ENCODE measurements at regions of chr11 and their contacts with region 1.

Region 1: GRCh38 chr11:46889689-46890475 is 28.5 kb downstream of the LRP4 start:
- DNase-seq: peak; percentile 67 to 81
- H3K4me3 ChIP-seq: no peak overlapping the region
- H3K4me3 Mint-ChIP-seq: no peak overlapping the region
- H3K27ac Mint-ChIP-seq: no peak overlapping the region
- H3K4me1 ChIP-seq: no peaks in the 10 kb centered on the region
- H3K4me1 Mint-ChIP-seq: no peaks in the 10 kb centered on the region
- H3K27me3 ChIP-seq: no peaks in the 10 kb centered on the region
- H3K27me3 Mint-ChIP-seq: no peaks in the 10 kb centered on the region
- CTCF ChIP-seq: peak; percentile 85 to 91

Region 2: DNA sequence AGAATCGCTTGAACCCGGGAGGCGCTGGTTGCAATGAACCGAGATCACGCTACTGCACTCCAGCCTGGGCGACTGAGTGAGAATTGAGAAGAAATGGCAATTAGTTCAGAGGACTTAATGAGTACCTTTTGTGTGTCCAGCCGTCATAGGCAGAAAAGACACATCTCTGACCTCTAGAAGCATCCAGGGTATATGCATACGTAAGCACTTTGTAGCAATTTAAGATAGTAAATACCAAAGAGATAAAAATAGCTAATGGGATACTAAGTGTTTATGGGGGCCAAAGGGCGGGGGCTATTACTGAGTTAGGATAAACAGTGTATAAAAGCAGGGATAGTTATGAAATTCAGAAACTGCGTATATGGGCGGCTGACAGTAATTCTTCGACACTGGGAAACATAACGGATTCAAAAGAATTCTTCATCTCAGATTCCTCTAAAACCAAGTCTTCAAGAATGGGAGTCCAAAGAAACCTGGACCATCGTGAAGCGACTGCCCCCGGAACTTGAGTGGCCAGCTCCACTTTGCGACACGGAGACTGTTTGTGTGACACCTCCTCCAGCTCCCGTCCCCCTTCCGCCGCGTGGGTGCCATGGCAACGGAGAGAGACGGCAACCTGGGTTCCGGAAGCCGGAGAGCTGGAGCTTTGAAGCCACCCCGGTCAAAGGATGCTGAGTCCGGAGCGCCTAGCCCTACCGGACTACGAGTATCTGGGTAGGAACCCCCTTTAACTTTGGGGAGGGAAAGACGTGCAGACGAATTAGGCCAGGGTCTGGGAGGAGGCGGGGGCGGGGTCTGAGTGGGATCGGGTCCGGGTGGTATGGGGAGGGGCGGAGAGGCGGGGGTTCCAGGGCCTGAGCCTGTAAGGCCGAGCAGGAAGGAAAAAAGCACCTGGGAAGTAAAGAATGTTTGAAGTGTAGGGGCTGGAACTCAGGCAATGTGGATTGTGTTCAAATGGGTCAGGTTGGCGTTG is 46.5 kb after region 1 on chr11 and contains the start of gene CSTPP1:
- CTCF ChIA-PET with region 1: no interaction called
- POLR2A ChIA-PET with region 1: no interaction called
- intact Hi-C with region 1: no loop called
- DNase-seq: peak; percentile 97
- H3K4me3 ChIP-seq: peak within 1 kb of the TSS; percentile 83
- H3K4me3 Mint-ChIP-seq: peak within 1 kb of the TSS; percentile 75
- H3K27ac Mint-ChIP-seq: peak within 1 kb of the TSS; percentile 75
- H3K4me1 ChIP-seq: 0 out of 2 replicates have a peak, but pooled peaks cover 4% of the 10 kb centered on the region
- H3K4me1 Mint-ChIP-seq: peaks cover 7% of the 10 kb centered on the region
- H3K27me3 ChIP-seq: no peaks in the 10 kb centered on the region
- H3K27me3 Mint-ChIP-seq: peaks cover 3% of the 10 kb centered on the region
- CTCF ChIP-seq: no peak
- total RNA-seq, gene CSTPP1: 19.8 and 22.9 TPM in 2 replicates

Region 3: DNA sequence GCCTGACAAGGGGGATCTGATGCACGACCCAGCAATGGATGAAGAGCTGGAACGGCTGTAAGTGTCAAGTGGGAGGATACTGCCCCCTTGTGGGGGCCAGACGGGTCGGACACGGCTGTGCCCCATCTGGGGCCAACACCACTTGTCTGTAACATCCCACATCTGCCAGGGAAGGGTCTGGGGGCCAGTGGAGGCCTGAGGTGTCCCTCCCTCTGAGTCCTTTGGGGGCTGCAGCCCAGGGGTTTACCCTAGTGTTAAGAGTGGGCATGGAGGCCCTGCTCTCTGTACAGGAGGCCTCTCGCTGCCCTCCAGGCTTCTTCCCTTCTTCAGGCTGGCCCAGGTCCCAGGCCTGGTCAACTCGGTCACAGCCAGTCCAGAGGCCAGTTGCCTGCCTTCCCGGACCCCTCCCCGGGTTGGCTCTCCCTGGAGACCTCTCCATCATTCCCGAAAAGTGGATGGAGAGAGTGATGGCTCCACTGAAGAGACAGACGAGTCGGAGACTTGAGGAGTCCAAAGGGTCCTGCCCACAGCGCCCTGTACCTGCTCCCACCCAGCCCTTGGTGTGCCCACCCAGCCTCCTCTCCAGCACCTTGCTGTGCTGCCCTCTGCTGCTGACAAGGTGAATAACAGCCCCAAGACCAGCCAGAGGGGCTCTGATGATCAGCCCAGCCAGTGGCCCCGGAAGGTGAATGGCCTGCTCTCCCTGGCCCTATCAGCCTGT is 271.4 kb after region 1 on chr11:
- CTCF ChIA-PET with region 1: interaction called, 3 read pairs
- POLR2A ChIA-PET with region 1: no interaction called
- intact Hi-C with region 1: loop called (anchors 1 kb)
- DNase-seq: peak; percentile 70 to 73
- H3K4me3 ChIP-seq: no peak overlapping the region
- H3K4me3 Mint-ChIP-seq: no peak overlapping the region
- H3K27ac Mint-ChIP-seq: no peak overlapping the region
- H3K4me1 ChIP-seq: no peaks in the 10 kb centered on the region
- H3K4me1 Mint-ChIP-seq: peaks cover 7% of the 10 kb centered on the region
- H3K27me3 ChIP-seq: no peaks in the 10 kb centered on the region
- H3K27me3 Mint-ChIP-seq: no peaks in the 10 kb centered on the region
- CTCF ChIP-seq: peak; percentile 68 to 81

Measured in Caco-2 (cell line).